ENCODE measurements at regions of chr2 and their contacts with region 1.

Region 1: GRCh38 chr2:162123806-162124758 is 28.0 kb downstream of the GCG start:
- DNase-seq: peak; percentile 70
- H3K4me3 ChIP-seq: no peak overlapping the region
- H3K27ac ChIP-seq: no peak overlapping the region
- H3K4me1 ChIP-seq: peaks cover 13% of the 10 kb centered on the region
- H3K27me3 ChIP-seq: peaks cover 0 to 9% of the 10 kb centered on the region in 2 experiments
- CTCF ChIP-seq: peak; percentile 29 to 41
- POLR2A ChIP-seq: no peak

Region 2: GRCh38 chr2:161426922-161427663 is 697.0 kb before region 1 on chr2:
- CTCF ChIA-PET with region 1: no interaction called
- POLR2A ChIA-PET with region 1: no interaction called
- dilution Hi-C with region 1: no loop called
- intact Hi-C with region 1: loop called (anchors 5 kb)
- DNase-seq: peak; percentile 39
- H3K4me3 ChIP-seq: no peak overlapping the region
- H3K27ac ChIP-seq: no peak overlapping the region
- H3K4me1 ChIP-seq: peaks cover 5% of the 10 kb centered on the region
- H3K27me3 ChIP-seq: peaks cover 71 to 100% of the 10 kb centered on the region in 2 experiments
- CTCF ChIP-seq: no peak
- POLR2A ChIP-seq: no peak

Region 3: GRCh38 chr2:161586517-161587167 is 537.4 kb before region 1 on chr2:
- CTCF ChIA-PET with region 1: interaction called, 34 read pairs
- POLR2A ChIA-PET with region 1: no interaction called
- dilution Hi-C with region 1: no loop called
- intact Hi-C with region 1: loop called (anchors 1 kb)
- DNase-seq: peak; percentile 42
- H3K4me3 ChIP-seq: no peak overlapping the region
- H3K27ac ChIP-seq: no peak overlapping the region
- H3K4me1 ChIP-seq: no peaks in the 10 kb centered on the region
- H3K27me3 ChIP-seq: no peaks in the 10 kb centered on the region
- CTCF ChIP-seq: peak; percentile 47
- POLR2A ChIP-seq: no peak

Region 4: DNA sequence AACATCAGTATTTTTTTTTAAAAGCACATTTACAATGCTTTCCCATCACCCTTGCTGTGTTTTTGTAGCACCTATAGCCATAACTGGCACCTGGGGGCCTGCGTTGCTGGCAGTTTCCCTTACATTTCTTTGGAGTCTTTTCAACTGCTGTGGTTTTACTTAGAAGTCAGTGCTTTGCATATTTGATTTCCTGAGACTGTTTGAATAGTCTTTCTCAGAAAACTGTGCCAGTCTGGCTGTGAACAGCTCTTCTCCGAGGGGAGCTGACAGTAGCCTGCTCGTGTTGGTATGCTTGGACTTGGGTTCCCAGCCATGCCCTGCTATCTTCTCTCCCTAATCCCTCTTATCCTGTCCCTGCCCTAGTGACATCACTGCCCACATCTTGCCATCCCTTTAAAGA is 131.6 kb before region 1 on chr2:
- CTCF ChIA-PET with region 1: interaction called, 3 read pairs
- POLR2A ChIA-PET with region 1: no interaction called
- dilution Hi-C with region 1: no loop called
- intact Hi-C with region 1: loop called (anchors 1 kb)
- DNase-seq: no peak
- H3K4me3 ChIP-seq: no peak overlapping the region
- H3K27ac ChIP-seq: no peak overlapping the region
- H3K4me1 ChIP-seq: no peaks in the 10 kb centered on the region
- H3K27me3 ChIP-seq: no peaks in the 10 kb centered on the region
- CTCF ChIP-seq: no peak
- POLR2A ChIP-seq: no peak

Region 5: DNA sequence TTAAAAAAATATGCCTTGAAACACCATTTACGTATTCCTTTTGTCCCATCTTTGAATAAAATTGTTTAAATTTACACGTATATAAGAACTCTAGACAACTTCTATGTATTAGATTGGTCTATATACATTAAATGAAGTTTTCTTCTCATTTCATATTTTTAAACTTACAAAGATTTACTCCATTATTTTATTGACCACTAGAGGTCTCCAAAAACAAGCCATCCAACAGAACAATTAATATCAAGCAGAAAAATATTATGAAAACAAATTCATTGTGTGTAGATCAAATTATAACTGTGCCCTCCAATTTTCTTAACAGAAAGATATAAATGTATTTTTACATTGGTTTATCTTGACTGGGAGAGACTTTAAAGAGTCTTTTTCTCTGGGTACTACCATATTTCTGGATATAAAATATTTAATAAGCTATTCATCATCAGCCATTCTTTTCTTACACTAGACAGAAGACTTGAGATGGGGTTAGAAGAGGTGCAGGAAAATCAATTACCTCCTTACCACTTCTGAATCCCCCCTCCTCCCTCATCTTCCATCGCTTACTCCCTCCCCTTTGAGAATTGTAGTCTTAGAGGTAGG is 116.5 kb before region 1 on chr2:
- CTCF ChIA-PET with region 1: interaction called, 70 read pairs
- POLR2A ChIA-PET with region 1: no interaction called
- dilution Hi-C with region 1: no loop called
- intact Hi-C with region 1: loop called (anchors 1 kb)
- DNase-seq: peak; percentile 38
- H3K4me3 ChIP-seq: no peak overlapping the region
- H3K27ac ChIP-seq: no peak overlapping the region
- H3K4me1 ChIP-seq: no peaks in the 10 kb centered on the region
- H3K27me3 ChIP-seq: no peaks in the 10 kb centered on the region
- CTCF ChIP-seq: peak; percentile 21 to 29
- POLR2A ChIP-seq: no peak

Region 6: GRCh38 chr2:162013514-162014475 is 110.3 kb before region 1 on chr2:
- CTCF ChIA-PET with region 1: interaction called, 11 read pairs
- POLR2A ChIA-PET with region 1: no interaction called
- dilution Hi-C with region 1: no loop called
- intact Hi-C with region 1: no loop called
- DNase-seq: peak; percentile 58
- H3K4me3 ChIP-seq: no peak overlapping the region
- H3K27ac ChIP-seq: no peak overlapping the region
- H3K4me1 ChIP-seq: peaks cover 11% of the 10 kb centered on the region
- H3K27me3 ChIP-seq: no peaks in the 10 kb centered on the region
- CTCF ChIP-seq: no peak
- POLR2A ChIP-seq: no peak

Measured in endothelial cell of umbilical vein (primary cell).